Right lobe of liver (tissue), 6 donors: ENCODE measurements at regions of chr11 and their contacts with region 1.

Region 1: DNA sequence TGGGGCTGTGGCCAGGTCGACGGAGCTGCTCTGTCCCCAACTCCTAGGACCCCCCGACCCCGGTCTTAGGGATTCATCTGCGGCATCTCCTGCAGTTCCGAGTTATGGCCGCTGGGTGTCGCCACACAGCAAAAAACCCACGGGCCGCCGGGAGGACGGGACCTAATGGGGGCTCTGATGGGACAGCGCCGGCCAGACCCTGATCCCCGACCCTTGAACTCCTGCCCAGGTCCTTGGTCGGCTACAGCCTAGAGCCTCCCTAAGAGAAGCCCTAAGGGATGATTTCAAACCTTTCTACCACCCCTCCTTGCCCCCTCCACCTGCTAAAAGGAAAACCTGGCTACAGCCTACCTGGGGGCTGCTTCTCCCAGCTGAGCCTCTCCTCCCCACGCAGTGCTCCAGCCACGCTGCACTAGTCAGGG is 30.8 kb upstream of the LRRC10B start:
- DNase-seq: peak in 2 of 3 donors; percentile 49 to 62
- ATAC-seq: peak; percentile 48 to 78 (median 74)
- H3K4me3 ChIP-seq: no peak overlapping the region
- H3K27ac ChIP-seq: no peak overlapping the region
- H3K4me1 ChIP-seq: peaks cover 0 to 3% (median 0%) of the 10 kb centered on the region in 4 donors
- H3K27me3 ChIP-seq: no peaks in the 10 kb centered on the region
- CTCF ChIP-seq: peak; percentile 88 to 93 (median 90)
- POLR2A ChIP-seq: no peak

Region 2: GRCh38 chr11:61516675-61517572 is 39.2 kb after region 1 on chr11:
- intact Hi-C with region 1: loop called (anchors 5 kb)
- DNase-seq: no peak
- ATAC-seq: peak; percentile 30 to 51 (median 46)
- H3K4me3 ChIP-seq: no peak overlapping the region
- H3K27ac ChIP-seq: no peak overlapping the region
- H3K4me1 ChIP-seq: no peaks in the 10 kb centered on the region
- H3K27me3 ChIP-seq: no peaks in the 10 kb centered on the region
- CTCF ChIP-seq: peak; percentile 86 to 94 (median 92)
- POLR2A ChIP-seq: no peak

Region 3: GRCh38 chr11:61627567-61628445 is 150.1 kb after region 1 on chr11:
- intact Hi-C with region 1: loop called in 1 of 2 experiments (anchors 5 kb)
- DNase-seq: peak; percentile 68 to 70 (median 68)
- ATAC-seq: peak; percentile 84 to 97 (median 91)
- H3K4me3 ChIP-seq: no peak overlapping the region
- H3K27ac ChIP-seq: no peak overlapping the region
- H3K4me1 ChIP-seq: no peaks in the 10 kb centered on the region
- H3K27me3 ChIP-seq: no peaks in the 10 kb centered on the region
- CTCF ChIP-seq: peak; percentile 59 to 80 (median 71)
- POLR2A ChIP-seq: no peak